CD4-positive, alpha-beta T cell (primary cell): ENCODE measurements at regions of chr1 and their contacts with region 1.

Region 1: DNA sequence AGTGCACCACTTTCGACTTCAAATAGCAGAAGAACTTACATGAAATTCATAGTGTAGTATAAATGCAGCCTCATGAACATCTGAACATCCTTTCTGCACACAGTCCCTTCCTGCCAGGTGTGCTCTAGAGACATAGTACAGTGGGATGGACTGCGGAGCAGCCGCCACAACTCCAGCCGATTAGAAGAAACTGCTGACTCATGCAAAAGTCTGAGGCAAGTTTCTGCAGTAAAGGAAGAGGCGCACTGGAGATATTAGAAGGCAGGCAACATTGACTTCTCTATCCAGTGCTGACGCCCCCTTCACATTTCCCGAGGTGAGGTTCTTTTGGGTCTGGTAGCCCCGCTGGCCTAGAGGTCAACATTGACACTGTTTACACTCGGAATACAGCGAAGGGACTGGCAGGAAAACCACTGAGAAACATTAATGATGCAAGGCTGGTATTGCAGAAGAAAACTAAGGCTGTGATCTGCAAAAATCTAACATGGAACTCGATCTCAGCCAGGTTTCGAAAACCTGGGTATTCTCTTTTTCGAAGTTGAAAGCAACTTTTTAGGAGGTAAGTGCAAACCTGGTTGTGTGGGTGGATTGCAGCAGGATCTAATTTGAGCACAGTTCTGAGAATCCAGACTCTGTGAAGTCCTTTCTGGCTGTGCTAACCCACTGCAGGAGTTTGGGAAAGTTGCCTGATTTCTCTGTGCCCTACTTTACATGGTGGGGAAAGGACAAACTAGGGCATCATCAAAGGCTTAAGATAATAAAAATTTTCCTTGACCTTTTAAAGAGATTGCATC is 90.7 kb downstream of the CDC7 start:
- DNase-seq: peak in 5 of 14 experiments; percentile 4 to 28 (median 24)
- ATAC-seq: peak; percentile 52
- H3K4me3 ChIP-seq: peak overlapping the region; percentile 21
- H3K4me3 Mint-ChIP-seq: peak overlapping the region; percentile 76
- H3K27ac ChIP-seq: no peak overlapping the region
- H3K27ac Mint-ChIP-seq: no peak overlapping the region
- H3K4me1 ChIP-seq: peaks cover 16% of the 10 kb centered on the region
- H3K4me1 Mint-ChIP-seq: peaks cover 20% of the 10 kb centered on the region
- H3K27me3 ChIP-seq: no peaks in the 10 kb centered on the region
- H3K27me3 Mint-ChIP-seq: no peaks in the 10 kb centered on the region
- CTCF ChIP-seq: no peak

Region 2: GRCh38 chr1:91885716-91886506 is 294.5 kb after region 1 on chr1 and contains the start of gene TGFBR3:
- CTCF ChIA-PET with region 1: interaction called, 4 read pairs
- POLR2A ChIA-PET with region 1: no interaction called
- intact Hi-C with region 1: loop called in 1 of 2 experiments (anchors 5 kb)
- DNase-seq: peak; percentile 44 to 87 (median 74)
- ATAC-seq: peak; percentile 71
- H3K4me3 ChIP-seq: peak within 1 kb of the TSS; percentile 72
- H3K4me3 Mint-ChIP-seq: peak within 1 kb of the TSS; percentile 96
- H3K27ac ChIP-seq: peak within 1 kb of the TSS in 1 of 2 donors; percentile 21
- H3K27ac Mint-ChIP-seq: peak within 1 kb of the TSS; percentile 77
- H3K4me1 ChIP-seq: peaks cover 30% of the 10 kb centered on the region
- H3K4me1 Mint-ChIP-seq: peaks cover 35% of the 10 kb centered on the region
- H3K27me3 ChIP-seq: no peaks in the 10 kb centered on the region
- H3K27me3 Mint-ChIP-seq: no peaks in the 10 kb centered on the region
- CTCF ChIP-seq: peak; percentile 35
- total RNA-seq, gene TGFBR3: 31.5 to 36.6 TPM